Activated T-helper 1 cell treated with anti-CD3 and anti-CD28 coated beads, Interleukin-12 subunit alpha, Interleukin-12 subunit beta, Interleukin-2, Interleukin-4 antibody, amounts not matched to agents 30 ng/mL and 10 ng/mL and 1 ng/mL, durations not matched to agents 14 hours and 24 hours and 36 hours (primary cell): ENCODE measurements at regions of chr6 and their contacts with region 1.

Region 1: GRCh38 chr6:140921366-140922226 is 1211.1 kb upstream of the GJE1 start:
- DNase-seq: no peak
- H3K4me3 Mint-ChIP-seq: no peak overlapping the region
- H3K27ac Mint-ChIP-seq: no peak overlapping the region
- H3K4me1 Mint-ChIP-seq: no peaks in the 10 kb centered on the region
- H3K27me3 Mint-ChIP-seq: no peaks in the 10 kb centered on the region

Region 2: GRCh38 chr6:139369568-139370282 is 1551.9 kb before region 1 on chr6:
- intact Hi-C with region 1: loop called (anchors 2 kb)
- DNase-seq: no peak
- H3K4me3 Mint-ChIP-seq: no peak overlapping the region
- H3K27ac Mint-ChIP-seq: no peak overlapping the region
- H3K4me1 Mint-ChIP-seq: peaks cover 36% of the 10 kb centered on the region
- H3K27me3 Mint-ChIP-seq: peaks cover 2% of the 10 kb centered on the region

Region 3: GRCh38 chr6:139881728-139882211 is 1039.8 kb before region 1 on chr6:
- intact Hi-C with region 1: loop called (anchors 1 kb)
- DNase-seq: no peak
- H3K4me3 Mint-ChIP-seq: no peak overlapping the region
- H3K27ac Mint-ChIP-seq: no peak overlapping the region
- H3K4me1 Mint-ChIP-seq: peaks cover 6% of the 10 kb centered on the region
- H3K27me3 Mint-ChIP-seq: peaks cover 3% of the 10 kb centered on the region

Region 4: DNA sequence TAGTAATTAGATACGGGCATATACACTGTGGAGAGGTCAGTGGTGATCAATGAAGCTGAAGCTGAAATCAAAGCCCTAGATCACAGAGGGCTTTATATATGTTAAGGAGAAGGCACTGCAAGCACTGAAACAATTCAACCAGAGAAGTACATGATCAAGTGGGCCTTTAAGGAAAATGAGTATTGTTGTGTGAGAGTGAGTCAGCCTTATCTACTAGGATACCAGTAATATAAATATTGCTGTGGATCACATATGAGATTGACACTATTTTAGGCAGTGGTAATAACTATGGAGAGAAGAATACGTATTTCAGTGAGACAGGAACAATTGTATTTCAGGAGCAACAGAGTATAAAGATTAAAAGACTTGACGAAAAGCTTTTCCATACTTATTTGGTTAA is 39.0 kb after region 1 on chr6:
- intact Hi-C with region 1: loop called (anchors 1 kb)
- DNase-seq: no peak
- H3K4me3 Mint-ChIP-seq: no peak overlapping the region
- H3K27ac Mint-ChIP-seq: no peak overlapping the region
- H3K4me1 Mint-ChIP-seq: no peaks in the 10 kb centered on the region
- H3K27me3 Mint-ChIP-seq: peaks cover 2% of the 10 kb centered on the region